ENCODE measurements at regions of chr5 and their contacts with region 1.

Region 1: DNA sequence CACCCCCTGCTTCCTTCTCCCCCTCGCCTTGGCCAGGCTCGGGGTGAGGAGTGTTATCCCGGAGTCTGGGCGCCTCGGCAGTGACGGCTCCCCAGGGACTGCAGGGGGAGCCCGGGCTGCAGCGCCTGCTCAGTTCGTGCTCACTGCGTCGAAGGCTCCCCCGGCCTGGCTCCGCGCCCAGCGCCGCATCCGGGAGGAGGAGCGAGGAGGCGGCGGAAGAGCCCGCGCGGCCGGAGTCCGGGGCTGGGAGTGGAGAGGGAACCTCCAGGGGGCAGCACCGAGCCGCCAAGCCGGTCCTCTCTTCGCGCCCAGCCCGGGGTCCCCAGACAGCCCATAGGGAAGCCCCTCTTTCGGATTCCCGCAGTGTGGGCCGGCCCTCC is 1.3 kb upstream of the EGR1 start:
- DNase-seq: peak; percentile 91
- H3K4me3 Mint-ChIP-seq: peak overlapping the region; percentile 83
- H3K27ac Mint-ChIP-seq: peak overlapping the region; percentile 93
- H3K4me1 Mint-ChIP-seq: peaks cover 55% of the 10 kb centered on the region
- H3K27me3 Mint-ChIP-seq: peaks cover 6% of the 10 kb centered on the region

Region 2: DNA sequence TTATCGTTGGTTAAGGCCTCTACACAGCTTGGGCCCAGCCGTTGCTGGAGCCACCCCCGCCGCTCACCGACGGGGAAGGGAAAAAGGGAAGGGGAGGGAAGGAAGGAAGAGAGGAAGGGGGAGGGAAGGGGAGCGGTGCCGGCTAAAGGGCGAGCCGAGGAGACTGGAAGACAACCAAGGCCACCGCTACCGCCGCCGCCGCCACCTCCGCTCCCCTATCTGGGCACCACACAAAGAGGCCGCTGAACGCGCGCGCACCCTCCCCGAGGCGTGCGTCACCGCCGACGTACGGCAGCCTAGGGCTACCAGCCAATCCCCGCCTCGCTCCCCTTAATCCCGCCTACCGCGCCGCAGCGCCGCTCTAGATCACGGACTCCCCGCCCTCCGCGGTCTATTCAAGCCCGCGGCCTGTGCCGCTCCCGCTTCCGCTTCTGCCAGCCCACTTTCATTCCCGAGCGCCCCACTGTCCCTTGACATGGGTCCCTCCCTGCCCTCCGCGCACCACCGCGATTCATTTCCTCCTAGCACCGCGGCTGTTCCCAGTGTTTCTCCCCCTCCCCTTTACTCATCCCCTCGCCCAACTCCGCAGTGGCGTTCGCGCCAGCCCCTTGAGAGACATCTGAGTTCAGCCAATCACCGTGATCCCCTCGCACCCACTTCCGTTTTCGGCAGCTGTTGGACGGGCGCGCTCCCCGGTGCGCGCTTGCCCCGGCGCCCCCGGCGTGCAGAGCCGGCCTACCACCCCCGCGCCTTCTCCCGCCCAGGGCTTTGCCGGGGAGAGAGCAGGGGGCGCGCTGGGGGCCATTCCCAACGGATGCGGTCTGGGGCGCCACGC is 709.7 kb before region 1 on chr5 and contains the start of gene HNRNPA0:
- intact Hi-C with region 1: loop called (anchors 10 kb)
- DNase-seq: peak; percentile 94
- H3K4me3 Mint-ChIP-seq: peak within 1 kb of the TSS; percentile 97
- H3K27ac Mint-ChIP-seq: peak within 1 kb of the TSS; percentile 100
- H3K4me1 Mint-ChIP-seq: peaks cover 22% of the 10 kb centered on the region
- H3K27me3 Mint-ChIP-seq: peaks cover 8% of the 10 kb centered on the region
- total RNA-seq, gene HNRNPA0: 37.5 and 37.8 TPM in 2 replicates

Region 3: DNA sequence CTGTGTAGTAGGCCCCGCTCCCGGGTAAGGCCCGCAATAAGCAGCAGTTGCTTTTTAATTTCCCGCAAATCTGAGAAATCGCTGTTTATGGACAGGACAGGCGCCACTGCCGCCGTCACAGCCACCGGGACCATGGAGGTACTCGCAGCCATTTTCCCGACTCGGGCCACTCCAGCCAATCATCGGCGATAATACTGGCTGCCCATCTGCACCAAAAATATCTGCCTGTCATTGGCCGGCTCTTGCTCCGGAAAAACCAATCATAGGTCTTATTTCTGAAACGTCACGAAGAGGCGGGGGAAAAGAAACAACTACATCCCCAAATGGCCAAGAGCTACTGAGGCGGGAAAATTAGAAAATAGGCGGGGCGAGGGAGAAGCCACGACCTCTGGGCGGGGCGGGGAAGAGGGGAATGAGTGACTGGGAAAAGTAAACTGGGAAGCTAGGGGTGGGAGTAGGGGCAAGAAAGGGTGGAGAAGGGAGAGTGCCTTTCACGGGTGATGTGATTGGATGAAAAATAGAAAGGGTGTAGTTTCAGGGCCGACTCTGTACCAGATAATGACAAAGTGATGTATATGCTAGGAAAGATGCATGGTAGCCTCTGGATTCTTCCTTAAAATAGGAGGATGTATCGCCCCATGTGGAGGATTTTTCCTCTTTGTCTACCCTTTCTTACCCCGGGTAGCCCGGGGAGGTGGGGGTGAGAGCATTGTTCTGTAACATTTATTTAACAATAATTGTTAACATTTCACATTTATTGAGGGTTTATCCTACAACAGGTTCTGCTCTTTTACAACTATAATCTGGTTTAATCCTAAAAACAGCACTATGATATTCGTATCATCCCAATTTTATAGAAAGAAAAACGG is 250.6 kb before region 1 on chr5 and contains the start of gene CDC23:
- intact Hi-C with region 1: loop called (anchors 1 kb)
- DNase-seq: peak; percentile 89
- H3K4me3 Mint-ChIP-seq: peak within 1 kb of the TSS; percentile 96
- H3K27ac Mint-ChIP-seq: peak within 1 kb of the TSS; percentile 93
- H3K4me1 Mint-ChIP-seq: peaks cover 24% of the 10 kb centered on the region
- H3K27me3 Mint-ChIP-seq: no peaks in the 10 kb centered on the region
- total RNA-seq, gene CDC23: 48.0 and 50.4 TPM in 2 replicates

Region 4: GRCh38 chr5:138438724-138439476 is 25.1 kb before region 1 on chr5 and contains the start of gene REEP2:
- intact Hi-C with region 1: loop called (anchors 1 kb)
- DNase-seq: peak; percentile 53
- H3K4me3 Mint-ChIP-seq: peak within 1 kb of the TSS; percentile 77
- H3K27ac Mint-ChIP-seq: peak within 1 kb of the TSS; percentile 67
- H3K4me1 Mint-ChIP-seq: peaks cover 13% of the 10 kb centered on the region
- H3K27me3 Mint-ChIP-seq: peaks cover 6% of the 10 kb centered on the region
- total RNA-seq, gene REEP2: 5.1 and 5.4 TPM in 2 replicates

Region 5: GRCh38 chr5:138503487-138504270 is 39.7 kb after region 1 on chr5:
- intact Hi-C with region 1: loop called (anchors 1 kb)
- DNase-seq: no peak
- H3K4me3 Mint-ChIP-seq: no peak overlapping the region
- H3K27ac Mint-ChIP-seq: no peak overlapping the region
- H3K4me1 Mint-ChIP-seq: peaks cover 5% of the 10 kb centered on the region
- H3K27me3 Mint-ChIP-seq: no peaks in the 10 kb centered on the region

Region 6: GRCh38 chr5:138654281-138654867 is 190.4 kb after region 1 on chr5:
- intact Hi-C with region 1: no loop called
- DNase-seq: peak; percentile 50
- H3K4me3 Mint-ChIP-seq: peak overlapping the region; percentile 54
- H3K27ac Mint-ChIP-seq: peak overlapping the region; percentile 81
- H3K4me1 Mint-ChIP-seq: peaks cover 19% of the 10 kb centered on the region
- H3K27me3 Mint-ChIP-seq: peaks cover 77% of the 10 kb centered on the region

Region 7: DNA sequence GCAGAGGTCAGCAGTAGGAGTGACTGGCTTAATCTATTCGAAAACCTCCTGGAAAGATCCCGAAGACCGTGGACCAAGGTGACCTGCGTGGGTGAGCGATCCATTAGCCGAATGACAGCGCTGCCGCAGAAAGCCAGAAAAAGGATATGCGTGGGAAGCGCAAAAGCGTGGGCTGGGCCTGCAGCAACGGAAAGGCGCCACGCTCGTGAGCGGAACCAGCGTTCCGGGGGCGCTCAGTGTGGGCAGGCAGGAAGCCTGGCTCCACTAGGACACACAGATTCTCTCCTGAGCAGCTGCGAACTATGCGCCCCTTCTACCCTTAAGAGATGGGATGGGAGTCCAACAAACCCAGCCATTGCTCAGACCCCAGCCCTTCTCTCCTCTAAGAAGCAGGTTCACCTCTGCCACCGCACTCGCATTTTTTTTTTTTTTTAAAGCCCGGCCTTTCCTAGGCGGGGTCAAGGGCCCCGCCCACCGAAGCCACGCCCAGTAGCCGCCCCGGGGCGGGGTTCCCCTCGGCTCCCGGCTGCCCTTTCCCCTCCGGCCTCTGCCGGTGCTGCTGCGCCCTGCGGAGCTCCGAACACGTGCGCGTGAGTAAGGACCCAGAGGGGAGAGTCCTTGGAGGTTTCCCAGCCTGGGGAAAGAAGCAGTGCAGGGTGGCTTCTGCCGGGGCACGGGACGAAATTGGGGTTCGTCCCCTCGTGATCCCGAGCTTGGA is 809.7 kb after region 1 on chr5:
- intact Hi-C with region 1: loop called (anchors 1 kb)
- DNase-seq: peak; percentile 85
- H3K4me3 Mint-ChIP-seq: peak overlapping the region; percentile 96
- H3K27ac Mint-ChIP-seq: peak overlapping the region; percentile 82
- H3K4me1 Mint-ChIP-seq: peaks cover 50% of the 10 kb centered on the region
- H3K27me3 Mint-ChIP-seq: peaks cover 9% of the 10 kb centered on the region

Region 8: GRCh38 chr5:139403787-139404483 is 939.9 kb after region 1 on chr5 and contains the start of gene SPATA24:
- intact Hi-C with region 1: loop called (anchors 5 kb)
- DNase-seq: peak; percentile 98
- H3K4me3 Mint-ChIP-seq: peak within 1 kb of the TSS; percentile 91
- H3K27ac Mint-ChIP-seq: peak within 1 kb of the TSS; percentile 100
- H3K4me1 Mint-ChIP-seq: peaks cover 47% of the 10 kb centered on the region
- H3K27me3 Mint-ChIP-seq: no peaks in the 10 kb centered on the region
- total RNA-seq, gene SPATA24: 4.1 and 5.3 TPM in 2 replicates

Measured in activated T-helper 1 cell treated with anti-CD3 and anti-CD28 coated beads, Interleukin-12 subunit alpha, Interleukin-12 subunit beta, Interleukin-2, Interleukin-4 antibody, amounts not matched to agents 30 ng/mL and 10 ng/mL and 1 ng/mL, durations not matched to agents 14 hours and 24 hours and 36 hours (primary cell).